ENCODE measurements at regions of chr5 and their contacts with region 1.

Region 1: GRCh38 chr5:14399054-14399692 is 182.4 kb upstream of the OTULINL start:
- DNase-seq: no peak
- H3K4me3 ChIP-seq: no peak overlapping the region
- H3K27ac ChIP-seq: no peak overlapping the region
- H3K4me1 ChIP-seq: peaks cover 0 to 10% (median 4%) of the 10 kb centered on the region in 3 donors
- H3K27me3 ChIP-seq: no peaks in the 10 kb centered on the region
- CTCF ChIP-seq: peak; percentile 27 to 61 (median 52)
- POLR2A ChIP-seq: no peak

Region 2: DNA sequence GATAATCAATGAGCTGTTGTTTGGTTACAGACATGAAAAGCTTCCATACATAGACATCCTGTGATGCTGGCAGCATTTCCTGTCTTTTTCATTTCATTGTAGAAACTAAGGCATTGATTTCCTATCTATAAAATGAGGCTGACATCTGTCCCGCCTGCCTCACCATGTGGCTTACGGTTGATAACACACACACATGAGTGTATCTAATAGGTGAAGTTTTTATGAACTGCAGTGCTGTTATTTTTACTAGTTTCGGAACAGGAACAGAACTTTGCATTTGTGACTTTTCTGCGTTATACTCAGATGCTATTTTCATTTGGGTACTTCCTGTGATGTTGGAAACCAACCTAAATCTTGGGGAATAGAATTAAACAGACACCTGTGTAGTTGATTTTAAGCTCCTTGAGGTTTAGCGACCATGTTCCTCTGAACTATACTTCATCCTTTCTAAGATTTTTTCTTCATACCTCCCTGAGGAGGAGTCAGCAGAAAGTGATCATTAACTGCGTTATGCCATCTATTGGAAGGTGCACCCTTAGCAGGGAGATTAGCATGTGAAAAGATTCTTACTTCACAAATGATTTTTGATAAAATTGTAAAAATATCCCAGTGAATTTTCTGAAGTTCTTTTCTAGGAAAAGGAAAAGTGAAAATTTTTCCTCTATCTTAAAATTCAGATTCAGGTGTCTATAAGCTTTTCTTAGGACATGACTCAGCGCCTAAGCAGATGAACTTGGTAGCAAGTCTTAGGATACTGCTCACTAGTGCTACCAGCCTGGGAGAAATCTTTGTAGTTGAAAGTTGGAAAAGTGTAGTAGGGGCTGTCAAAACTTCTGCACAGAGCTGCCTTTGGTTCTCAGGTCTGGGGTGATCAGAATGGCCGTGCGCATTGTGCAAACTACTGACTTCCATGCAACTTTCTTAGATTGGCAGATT is 121.5 kb before region 1 on chr5:
- intact Hi-C with region 1: no loop called
- DNase-seq: no peak
- H3K4me3 ChIP-seq: no peak overlapping the region
- H3K27ac ChIP-seq: no peak overlapping the region
- H3K4me1 ChIP-seq: no peaks in the 10 kb centered on the region
- H3K27me3 ChIP-seq: no peaks in the 10 kb centered on the region
- CTCF ChIP-seq: no peak
- POLR2A ChIP-seq: no peak

Region 3: DNA sequence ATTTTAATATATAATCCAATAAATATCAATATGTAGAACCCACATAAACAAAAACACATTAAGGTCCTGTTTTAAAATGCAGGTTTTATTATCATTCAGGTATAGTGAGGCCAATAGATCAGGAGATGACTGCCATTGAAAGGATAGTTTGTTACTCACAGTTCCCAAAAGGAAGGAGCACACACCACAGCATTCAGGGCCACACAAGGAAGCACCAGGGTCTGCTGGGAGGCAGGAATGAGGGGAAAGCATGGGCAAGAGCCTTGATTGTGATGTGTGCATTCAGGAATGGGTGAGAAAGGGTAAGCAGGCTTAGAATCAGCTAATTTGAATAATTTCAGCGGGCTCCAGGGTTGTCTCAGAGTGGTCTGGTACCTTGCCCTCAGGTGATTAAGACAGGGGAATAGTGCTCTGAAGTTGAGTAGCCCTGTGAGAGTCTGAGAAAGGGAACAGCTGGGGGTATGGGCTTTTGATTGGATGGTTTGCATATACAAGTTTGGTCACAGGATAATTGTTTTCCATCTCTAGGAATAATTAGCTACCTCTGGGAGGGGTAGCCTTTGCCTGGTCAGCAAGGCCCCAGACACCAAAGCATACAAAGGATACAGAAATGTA is 245.6 kb after region 1 on chr5:
- intact Hi-C with region 1: loop called (anchors 10 kb)
- DNase-seq: no peak
- H3K4me3 ChIP-seq: no peak overlapping the region
- H3K27ac ChIP-seq: no peak overlapping the region
- H3K4me1 ChIP-seq: no peaks in the 10 kb centered on the region
- H3K27me3 ChIP-seq: peaks cover 0 to 22% (median 0%) of the 10 kb centered on the region in 4 donors
- CTCF ChIP-seq: no peak
- POLR2A ChIP-seq: no peak

Measured in esophagus squamous epithelium (tissue), 5 donors.